ENCODE measurements at regions of chr7 and their contacts with region 1.

Region 1: DNA sequence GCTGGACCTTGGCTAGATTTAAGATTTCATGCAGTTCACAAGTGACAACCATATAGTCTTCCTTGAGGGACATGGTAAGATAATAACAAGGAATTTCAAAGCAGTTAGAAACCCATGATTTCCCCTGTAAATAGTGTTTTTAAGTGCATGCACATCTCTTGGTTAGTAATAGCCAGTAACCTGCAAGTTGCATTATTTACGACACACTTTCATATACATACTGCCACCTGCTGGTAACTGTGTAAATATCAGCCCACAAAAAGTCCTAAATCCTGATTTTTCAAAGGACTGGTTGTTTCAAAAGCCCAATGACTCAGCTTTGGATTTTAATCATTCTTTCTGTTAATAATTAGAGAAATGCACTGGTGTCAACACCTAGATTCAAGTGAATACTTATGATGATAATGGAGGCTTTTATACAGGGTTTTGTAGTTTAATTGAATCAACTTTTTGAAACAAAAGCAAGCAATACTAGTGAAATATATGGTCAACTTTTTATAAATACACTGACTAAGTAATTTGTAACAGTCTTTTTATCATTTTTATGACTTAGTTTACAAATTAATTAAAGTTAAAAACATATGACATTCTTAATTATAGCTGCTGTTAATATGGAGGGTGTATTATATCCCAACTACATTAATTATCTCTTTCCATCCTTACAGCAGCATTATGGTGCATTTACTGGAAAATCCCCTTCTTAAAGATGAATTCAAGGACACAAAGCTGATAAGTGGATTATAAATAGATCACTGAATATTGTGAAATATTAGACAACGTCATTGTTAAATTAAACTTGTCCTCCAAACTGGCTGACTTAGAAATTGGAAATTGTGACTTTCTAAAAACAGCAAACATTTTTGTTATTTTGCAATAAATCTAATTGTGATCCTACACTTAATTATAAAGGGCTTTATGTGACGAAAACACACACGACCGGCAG is 367.7 kb upstream of the SEMA3D start:
- DNase-seq: peak in 1 of 3 donors; percentile 36
- ATAC-seq: peak; percentile 62
- H3K4me3 ChIP-seq: no peak overlapping the region
- H3K4me1 ChIP-seq: no peaks in the 10 kb centered on the region
- CTCF ChIP-seq: peak; percentile 28

Region 2: GRCh38 chr7:85041605-85042216 is 512.8 kb before region 1 on chr7:
- intact Hi-C with region 1: loop called (anchors 10 kb)
- DNase-seq: peak in 2 of 3 donors; percentile 55 to 81
- ATAC-seq: peak; percentile 66
- H3K4me3 ChIP-seq: no peak overlapping the region
- H3K4me1 ChIP-seq: no peaks in the 10 kb centered on the region
- CTCF ChIP-seq: no peak

Measured in mucosa of descending colon (tissue), 3 donors.